ENCODE measurements at regions of chrX and their contacts with region 1.

Region 1: GRCh38 chrX:44914532-44915198 is 41.7 kb downstream of the KDM6A start:
- DNase-seq: no peak
- H3K4me3 ChIP-seq: no peak overlapping the region
- H3K27ac ChIP-seq: no peak overlapping the region
- H3K4me1 ChIP-seq: peaks cover 12% of the 10 kb centered on the region
- H3K27me3 ChIP-seq: no peaks in the 10 kb centered on the region
- CTCF ChIP-seq: no peak

Region 2: GRCh38 chrX:44898411-44899221 is 16.0 kb before region 1 on chrX:
- CTCF ChIA-PET with region 1: interaction called, 19 read pairs
- dilution Hi-C with region 1: no loop called
- in situ Hi-C with region 1: no loop called
- intact Hi-C with region 1: no loop called
- DNase-seq: peak; percentile 33
- H3K4me3 ChIP-seq: no peak overlapping the region
- H3K27ac ChIP-seq: no peak overlapping the region
- H3K4me1 ChIP-seq: peaks cover 4% of the 10 kb centered on the region
- H3K27me3 ChIP-seq: no peaks in the 10 kb centered on the region
- CTCF ChIP-seq: no peak

Region 3: GRCh38 chrX:45295259-45295986 is 380.8 kb after region 1 on chrX:
- CTCF ChIA-PET with region 1: no interaction called
- dilution Hi-C with region 1: no loop called
- in situ Hi-C with region 1: no loop called
- intact Hi-C with region 1: no loop called
- DNase-seq: peak; percentile 46
- H3K4me3 ChIP-seq: no peak overlapping the region
- H3K27ac ChIP-seq: no peak overlapping the region
- H3K4me1 ChIP-seq: peaks cover 5% of the 10 kb centered on the region
- H3K27me3 ChIP-seq: peaks cover 3% of the 10 kb centered on the region
- CTCF ChIP-seq: no peak

Measured in mammary epithelial cell (primary cell).